Caco-2 (cell line): ENCODE measurements at regions of chr5 and their contacts with region 1.

Region 1: DNA sequence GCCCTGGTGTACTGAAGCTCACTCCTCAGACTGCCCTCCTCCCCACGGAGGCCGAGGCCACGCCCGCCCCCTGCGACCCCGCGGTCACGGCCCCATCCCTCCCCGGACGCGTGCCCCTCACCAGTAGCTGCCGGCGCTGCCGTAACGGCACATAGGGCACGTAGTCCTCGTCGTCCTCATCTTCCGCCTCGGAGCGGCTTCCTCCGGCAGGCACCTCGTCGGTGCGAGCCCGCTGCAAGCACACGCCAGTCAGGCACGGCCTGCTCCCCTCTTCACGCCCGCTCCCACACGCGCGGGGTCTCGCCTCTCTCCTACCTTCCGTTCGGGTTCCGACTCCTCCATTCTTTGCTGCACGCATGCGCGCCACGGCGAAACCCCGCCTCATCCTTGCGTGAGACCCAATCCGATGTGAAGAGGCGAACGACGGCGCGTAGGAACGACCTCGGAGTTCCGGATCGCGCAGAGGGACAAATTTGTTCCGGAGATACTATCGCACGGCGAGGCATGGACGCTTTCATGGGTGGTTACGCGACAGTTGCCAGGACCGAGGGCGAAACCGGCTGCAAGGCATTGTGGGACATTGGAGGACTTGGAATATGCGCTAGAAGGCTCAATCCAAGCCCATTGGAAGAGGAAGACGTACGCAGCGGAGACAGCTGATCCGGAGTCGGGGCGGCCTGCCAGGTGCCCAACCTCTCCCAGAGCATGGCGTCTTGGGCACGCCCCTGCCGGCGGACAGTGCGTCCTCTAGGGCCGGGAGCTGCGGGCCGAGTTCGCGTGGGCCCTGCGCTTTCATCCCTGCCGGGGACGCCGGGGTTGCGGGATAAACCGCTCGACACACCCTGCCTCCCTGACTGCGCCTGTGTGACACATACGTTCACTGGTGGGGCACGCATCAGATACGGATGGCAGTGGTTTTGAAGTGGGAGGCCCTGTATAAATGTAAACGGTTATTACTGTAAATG is at the start of gene DDX41:
- DNase-seq: peak; percentile 96 to 97
- H3K4me3 ChIP-seq: peak within 1 kb of the TSS; percentile 99
- H3K4me3 Mint-ChIP-seq: peak within 1 kb of the TSS; percentile 92
- H3K27ac Mint-ChIP-seq: peak within 1 kb of the TSS; percentile 92
- H3K4me1 ChIP-seq: peaks cover 12% of the 10 kb centered on the region; the same call in 1 of the 2 replicates
- H3K4me1 Mint-ChIP-seq: peaks cover 15% of the 10 kb centered on the region
- H3K27me3 ChIP-seq: no peaks in the 10 kb centered on the region
- H3K27me3 Mint-ChIP-seq: no peaks in the 10 kb centered on the region
- CTCF ChIP-seq: no peak
- total RNA-seq, gene DDX41: 116 and 137 TPM in 2 replicates

Region 2: GRCh38 chr5:177588413-177588909 is 71.6 kb after region 1 on chr5:
- CTCF ChIA-PET with region 1: no interaction called
- POLR2A ChIA-PET with region 1: interaction called, 4 read pairs
- intact Hi-C with region 1: loop called (anchors 1 kb)
- DNase-seq: peak; percentile 79 to 84
- H3K4me3 ChIP-seq: no peak overlapping the region
- H3K4me3 Mint-ChIP-seq: peak overlapping the region; percentile 68
- H3K27ac Mint-ChIP-seq: peak overlapping the region; percentile 49
- H3K4me1 ChIP-seq: peaks cover 22% of the 10 kb centered on the region
- H3K4me1 Mint-ChIP-seq: peaks cover 20% of the 10 kb centered on the region
- H3K27me3 ChIP-seq: no peaks in the 10 kb centered on the region; the same call in none of the 2 replicates
- H3K27me3 Mint-ChIP-seq: peaks cover 8% of the 10 kb centered on the region
- CTCF ChIP-seq: peak in 1 of 2 experiments; percentile 13